AG04449 (cell line): ENCODE measurements at regions of chr1 and their contacts with region 1.

Region 1: GRCh38 chr1:227542143-227543120 is 20.9 kb upstream of the ZNF678 start:
- DNase-seq: peak; percentile 7
- H3K4me3 ChIP-seq: peak overlapping the region; percentile 71
- CTCF ChIP-seq: peak; percentile 86

Region 2: GRCh38 chr1:227396539-227397353 is 145.7 kb before region 1 on chr1:
- CTCF ChIA-PET with region 1: no interaction called
- POLR2A ChIA-PET with region 1: no interaction called
- DNase-seq: no peak
- H3K4me3 ChIP-seq: no peak overlapping the region
- CTCF ChIP-seq: no peak

Region 3: DNA sequence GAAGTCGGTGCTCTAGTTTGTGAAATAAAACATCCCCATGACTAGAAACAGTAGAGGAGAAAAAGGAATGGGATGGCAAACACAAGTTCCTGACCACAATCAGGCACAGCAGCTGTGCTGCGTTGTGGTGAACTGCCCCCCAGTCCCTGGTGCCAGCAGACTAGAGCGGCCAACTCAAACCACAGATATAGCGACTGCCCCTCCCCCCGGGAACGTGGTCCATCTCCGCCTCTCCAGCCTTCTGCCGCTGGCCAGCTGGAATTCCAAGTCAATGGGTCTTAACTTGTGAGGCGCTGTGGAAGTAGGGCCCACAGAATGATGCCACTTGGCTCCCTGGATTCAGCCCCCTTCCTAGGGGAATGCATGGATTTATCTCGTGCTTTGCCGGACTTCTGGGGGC is 20.6 kb before region 1 on chr1:
- CTCF ChIA-PET with region 1: interaction called, 10 read pairs
- POLR2A ChIA-PET with region 1: no interaction called
- DNase-seq: no peak
- H3K4me3 ChIP-seq: no peak overlapping the region
- CTCF ChIP-seq: no peak

Region 4: DNA sequence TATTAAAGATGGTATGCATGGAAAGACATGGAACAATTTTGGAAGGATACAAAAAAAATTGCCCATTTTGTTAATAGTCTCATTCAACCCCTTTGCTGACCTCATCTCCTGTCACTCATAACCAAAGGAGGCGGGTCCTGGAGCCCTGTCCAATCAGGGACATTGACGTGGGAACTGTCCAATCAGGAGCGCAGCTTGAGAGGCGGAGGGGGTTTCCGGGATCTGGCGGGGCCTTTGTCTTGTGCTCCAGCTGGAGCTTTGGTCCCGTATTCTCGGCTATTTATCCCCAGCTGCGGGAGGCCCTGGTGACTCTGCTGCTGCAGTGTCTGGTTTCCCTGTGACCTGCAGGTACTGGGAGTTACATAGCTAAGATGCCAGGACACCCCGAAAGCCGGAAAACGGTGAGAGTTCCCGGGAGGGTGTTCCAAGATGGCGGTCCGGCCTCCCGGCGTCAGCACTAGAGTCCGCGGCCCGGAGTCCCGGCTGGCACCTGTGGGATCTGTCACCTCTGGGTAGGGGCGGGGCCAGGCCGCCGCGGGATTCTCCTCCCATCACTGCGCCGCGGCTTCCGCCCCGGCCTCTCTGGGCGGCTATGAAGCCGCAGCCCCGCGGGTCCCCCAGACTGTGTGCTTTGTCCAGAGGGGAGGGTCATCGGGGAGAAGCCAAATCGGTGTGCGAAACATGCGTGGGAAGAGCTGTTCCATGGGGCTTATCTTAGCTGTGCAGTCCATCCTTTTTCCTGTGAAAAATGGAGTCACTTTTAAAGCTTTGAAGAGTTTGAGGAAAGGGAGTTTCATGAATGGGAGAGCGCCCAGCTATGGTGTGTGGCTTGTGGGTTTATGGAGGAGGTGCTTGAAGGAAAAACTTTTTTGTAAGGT is 21.1 kb after region 1 on chr1 and contains the start of gene ZNF678:
- CTCF ChIA-PET with region 1: interaction called, 20 read pairs
- POLR2A ChIA-PET with region 1: interaction called, 3 read pairs
- DNase-seq: peak; percentile 60
- H3K4me3 ChIP-seq: peak within 1 kb of the TSS; percentile 79
- CTCF ChIP-seq: no peak